Calu3 (cell line): ENCODE measurements at regions of chr20 and their contacts with region 1.

Region 1: GRCh38 chr20:51487565-51488268 is 54.8 kb downstream of the NFATC2 start:
- DNase-seq: peak; percentile 82
- H3K4me3 Mint-ChIP-seq: peak overlapping the region; percentile 73
- H3K27ac Mint-ChIP-seq: peak overlapping the region; percentile 91
- H3K4me1 Mint-ChIP-seq: peaks cover 29% of the 10 kb centered on the region
- H3K27me3 Mint-ChIP-seq: no peaks in the 10 kb centered on the region
- CTCF ChIP-seq: no peak

Region 2: GRCh38 chr20:51531141-51531710 is 43.5 kb after region 1 on chr20:
- CTCF ChIA-PET with region 1: interaction called, 3 read pairs
- intact Hi-C with region 1: loop called (anchors 5 kb)
- DNase-seq: no peak
- H3K4me3 Mint-ChIP-seq: no peak overlapping the region
- H3K27ac Mint-ChIP-seq: no peak overlapping the region
- H3K4me1 Mint-ChIP-seq: peaks cover 18% of the 10 kb centered on the region
- H3K27me3 Mint-ChIP-seq: no peaks in the 10 kb centered on the region
- CTCF ChIP-seq: no peak

Region 3: DNA sequence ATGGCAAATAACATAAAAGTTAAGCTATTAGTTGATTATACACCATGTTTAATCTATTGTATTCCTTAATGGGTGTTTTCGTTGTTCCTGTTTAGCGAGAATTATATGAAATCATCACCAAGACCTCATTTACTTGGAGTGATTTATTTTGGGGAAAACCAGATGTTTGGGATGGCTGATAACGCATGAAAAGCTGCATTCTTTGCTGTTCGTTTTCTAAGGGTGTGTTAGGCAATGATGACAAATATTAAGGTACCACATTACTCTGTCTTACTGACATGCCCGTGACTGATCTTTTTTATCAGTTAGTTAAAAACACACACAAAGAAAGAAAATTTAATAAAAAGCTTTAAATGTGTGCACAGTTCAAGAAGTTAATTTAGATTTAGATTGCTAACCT is 527.4 kb after region 1 on chr20:
- CTCF ChIA-PET with region 1: no interaction called
- intact Hi-C with region 1: no loop called
- DNase-seq: no peak
- H3K4me3 Mint-ChIP-seq: no peak overlapping the region
- H3K27ac Mint-ChIP-seq: no peak overlapping the region
- H3K4me1 Mint-ChIP-seq: no peaks in the 10 kb centered on the region
- H3K27me3 Mint-ChIP-seq: no peaks in the 10 kb centered on the region
- CTCF ChIP-seq: no peak